Activated CD4-positive, alpha-beta T cell treated with anti-CD3 and anti-CD28 coated beads, Interleukin-2, amount 10 ng/mL, durations not matched to agents 24 days and 14 days (primary cell): ENCODE measurements at regions of chr3 and their contacts with region 1.

Region 1: DNA sequence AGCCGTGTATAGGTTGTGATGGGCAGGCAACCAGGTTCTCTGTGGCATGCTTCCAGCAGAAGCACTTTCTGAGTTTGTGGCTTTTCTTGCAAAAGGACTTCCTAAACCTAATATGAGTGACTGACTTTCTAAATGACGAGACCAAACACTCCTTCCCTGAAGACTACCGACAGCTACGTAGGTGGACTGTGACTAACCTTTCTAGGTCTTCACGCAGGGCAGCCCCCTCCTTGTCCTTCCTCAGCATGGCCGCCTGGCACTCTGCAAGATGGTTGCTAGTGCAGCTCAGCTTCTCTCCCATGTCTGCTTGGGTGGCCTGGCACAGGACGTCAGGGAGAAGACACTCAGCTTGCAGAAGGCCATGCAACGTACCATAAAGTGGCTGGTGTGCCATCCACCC is 20.9 kb downstream of the CXCR6 start:
- DNase-seq: peak; percentile 80
- H3K4me3 Mint-ChIP-seq: peak overlapping the region; percentile 67
- H3K27ac Mint-ChIP-seq: peak overlapping the region; percentile 81
- H3K4me1 Mint-ChIP-seq: peaks cover 69% of the 10 kb centered on the region
- H3K27me3 Mint-ChIP-seq: no peaks in the 10 kb centered on the region

Region 2: DNA sequence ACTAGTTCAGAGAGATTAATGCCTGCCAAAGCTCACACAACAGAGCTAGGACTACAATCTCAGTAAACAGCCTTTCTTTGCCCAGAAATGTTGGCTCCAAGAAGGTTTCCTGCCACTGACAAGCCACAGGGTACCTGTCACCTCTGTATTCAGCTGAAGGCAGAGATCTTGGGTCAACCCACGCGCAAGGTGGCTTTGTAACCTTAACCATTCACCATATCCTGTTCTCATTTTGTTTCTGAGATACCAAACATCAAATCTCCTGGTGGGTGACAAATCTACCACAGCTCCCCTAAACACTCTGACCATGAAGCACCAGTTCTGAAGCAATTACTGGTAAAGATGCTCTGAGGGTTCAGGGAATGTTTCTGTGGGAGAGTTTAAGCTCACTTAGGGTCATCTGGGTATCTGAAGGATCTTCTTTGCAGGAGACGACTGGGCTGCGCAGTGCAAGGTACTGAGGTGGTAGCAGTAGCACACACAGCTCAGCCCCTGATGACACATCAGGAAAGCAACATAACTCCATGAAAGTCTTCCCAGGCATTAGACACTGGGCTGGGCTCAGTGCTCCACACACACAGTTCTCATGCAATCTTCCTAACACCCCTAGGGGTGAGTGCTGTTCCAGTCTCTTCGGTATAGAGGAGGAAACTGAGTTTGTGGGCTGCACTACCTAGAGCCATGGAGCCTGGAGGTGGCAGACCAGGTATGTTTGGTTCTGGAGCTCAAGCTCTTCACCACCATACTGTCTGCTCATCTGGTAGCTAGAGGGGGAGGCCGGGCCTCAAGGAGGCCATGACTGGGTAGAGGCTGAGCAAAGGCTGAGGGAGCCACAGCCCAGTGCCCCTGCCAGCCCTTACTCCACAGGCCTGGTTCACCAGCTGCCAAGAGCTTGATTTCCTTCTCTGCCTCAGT is 13.2 kb before region 1 on chr3:
- intact Hi-C with region 1: loop called (anchors 1 kb)
- DNase-seq: peak; percentile 87
- H3K4me3 Mint-ChIP-seq: peak overlapping the region; percentile 45
- H3K27ac Mint-ChIP-seq: peak overlapping the region; percentile 87
- H3K4me1 Mint-ChIP-seq: peaks cover 75% of the 10 kb centered on the region
- H3K27me3 Mint-ChIP-seq: no peaks in the 10 kb centered on the region

Region 3: DNA sequence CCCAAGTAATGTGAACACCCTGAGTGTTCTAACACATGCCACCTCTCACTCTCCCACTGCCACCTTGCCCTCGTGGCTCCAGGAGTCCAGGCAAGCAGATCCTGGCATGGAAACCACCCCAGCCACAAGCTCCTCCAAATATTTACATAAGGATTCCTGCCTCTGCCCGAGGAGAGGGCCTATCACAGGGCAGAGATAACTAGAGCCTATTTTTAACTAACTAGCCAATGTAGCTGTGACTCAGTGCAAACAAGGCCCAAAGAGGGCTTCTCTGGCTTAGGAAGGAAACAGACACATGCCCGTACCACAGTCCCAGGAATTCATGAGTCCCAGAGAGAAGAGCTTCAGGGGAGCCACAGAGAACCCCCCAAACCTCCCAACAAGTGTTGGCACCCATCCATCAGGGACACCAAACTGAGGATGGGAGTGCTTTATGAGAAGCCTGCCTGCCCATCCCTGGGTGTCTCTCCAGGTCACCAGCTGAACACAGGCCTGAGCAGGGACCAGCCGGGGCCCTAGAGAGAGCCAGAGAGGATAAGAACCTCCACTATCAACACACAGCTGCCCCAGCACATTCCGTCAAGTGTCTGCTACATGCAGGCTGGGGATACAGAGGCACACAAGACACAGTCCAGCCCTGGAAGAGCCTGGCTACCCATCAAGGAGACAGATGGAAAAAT is 22.3 kb after region 1 on chr3:
- intact Hi-C with region 1: no loop called
- DNase-seq: no peak
- H3K4me3 Mint-ChIP-seq: no peak overlapping the region
- H3K27ac Mint-ChIP-seq: peak overlapping the region; percentile 18
- H3K4me1 Mint-ChIP-seq: peaks cover 63% of the 10 kb centered on the region
- H3K27me3 Mint-ChIP-seq: no peaks in the 10 kb centered on the region

Region 4: DNA sequence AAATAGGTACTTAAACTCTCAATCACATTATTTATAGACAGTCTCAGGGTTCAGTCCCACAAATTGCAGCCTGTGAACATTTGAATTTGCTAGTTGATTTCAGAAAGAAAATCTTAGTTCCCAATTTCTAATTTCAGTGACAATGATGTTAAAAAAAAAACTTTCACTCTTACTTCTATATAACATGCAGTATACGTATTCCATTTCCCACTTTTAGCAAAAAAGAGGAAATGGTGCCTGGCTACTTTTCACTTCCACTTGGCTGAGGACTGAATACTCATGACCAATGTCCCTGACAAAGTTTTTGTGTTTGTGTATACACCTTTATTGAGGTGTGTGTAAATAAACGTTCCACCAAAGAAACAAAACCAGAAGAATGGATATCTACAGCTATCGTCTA is 95.3 kb after region 1 on chr3:
- intact Hi-C with region 1: no loop called
- DNase-seq: no peak
- H3K4me3 Mint-ChIP-seq: no peak overlapping the region
- H3K27ac Mint-ChIP-seq: no peak overlapping the region
- H3K4me1 Mint-ChIP-seq: peaks cover 6% of the 10 kb centered on the region
- H3K27me3 Mint-ChIP-seq: peaks cover 71% of the 10 kb centered on the region

Region 5: GRCh38 chr3:46517016-46517793 is 553.1 kb after region 1 on chr3:
- intact Hi-C with region 1: no loop called
- DNase-seq: no peak
- H3K4me3 Mint-ChIP-seq: no peak overlapping the region
- H3K27ac Mint-ChIP-seq: no peak overlapping the region
- H3K4me1 Mint-ChIP-seq: no peaks in the 10 kb centered on the region
- H3K27me3 Mint-ChIP-seq: peaks cover 19% of the 10 kb centered on the region